CD4-positive, alpha-beta memory T cell (primary cell): ENCODE measurements at regions of chr4 and their contacts with region 1.

Region 1: DNA sequence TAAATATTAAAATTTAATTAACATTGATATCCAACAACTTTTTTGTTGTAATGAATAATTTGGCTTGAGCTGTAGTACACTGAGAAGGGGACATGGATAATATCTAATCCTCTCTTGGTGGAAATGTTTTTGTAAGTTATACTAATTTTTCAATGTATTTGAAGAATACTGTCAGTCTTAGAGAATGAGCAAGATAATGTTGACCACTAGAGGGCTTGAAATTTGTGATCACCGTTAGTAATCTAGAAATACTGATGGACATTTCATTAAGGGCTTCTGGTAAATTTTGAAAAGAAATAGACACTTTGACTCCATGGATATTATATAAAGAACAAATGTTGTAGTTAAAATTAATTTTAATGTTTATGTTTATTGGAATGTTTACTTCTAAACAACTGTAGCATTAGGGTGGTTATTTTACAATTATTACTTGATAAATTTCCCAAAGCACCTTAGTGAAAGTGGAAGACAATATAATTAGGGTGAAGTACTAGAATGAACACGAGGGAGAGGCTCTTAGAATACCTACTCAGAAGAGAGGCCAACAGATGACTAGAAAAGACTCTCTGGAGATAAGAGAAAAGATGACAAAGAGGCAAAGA is 20.0 kb upstream of the CAMK2D start:
- DNase-seq: peak in 4 of 5 donors; percentile 25 to 35 (median 30)
- H3K4me3 ChIP-seq: no peak overlapping the region
- H3K4me3 Mint-ChIP-seq: no peak overlapping the region
- H3K27ac ChIP-seq: no peak overlapping the region
- H3K27ac Mint-ChIP-seq: no peak overlapping the region
- H3K4me1 ChIP-seq: no peaks in the 10 kb centered on the region
- H3K4me1 Mint-ChIP-seq: peaks cover 0 to 8% (median 2%) of the 10 kb centered on the region in 4 donors
- H3K27me3 ChIP-seq: no peaks in the 10 kb centered on the region
- H3K27me3 Mint-ChIP-seq: peaks cover 0 to 1% of the 10 kb centered on the region in 2 donors

Region 2: DNA sequence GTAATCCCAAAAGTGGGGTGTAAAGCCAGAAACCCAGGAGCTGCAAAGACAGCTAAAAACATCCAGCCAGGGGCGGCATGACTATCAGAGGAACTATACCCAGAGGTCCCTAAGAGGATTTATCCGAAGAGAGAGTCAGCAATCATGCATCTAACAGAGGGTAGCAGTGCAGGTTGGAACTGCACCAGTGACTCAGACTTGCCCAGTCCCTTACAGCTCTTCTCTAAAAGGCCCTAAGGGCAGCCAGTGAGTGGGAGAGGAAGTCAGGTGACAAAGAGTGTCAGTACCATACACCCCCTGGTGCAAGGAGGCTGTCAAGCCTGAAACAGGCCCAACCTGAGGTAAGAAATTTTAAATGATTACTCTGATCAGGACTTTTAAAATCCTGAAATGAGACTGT is 108.1 kb before region 1 on chr4:
- CTCF ChIA-PET with region 1: no interaction called
- POLR2A ChIA-PET with region 1: no interaction called
- intact Hi-C with region 1: no loop called
- DNase-seq: peak in 1 of 5 donors; percentile 52
- H3K4me3 ChIP-seq: no peak overlapping the region
- H3K4me3 Mint-ChIP-seq: peak overlapping the region in 2 of 8 donors; percentile 10 to 28
- H3K27ac ChIP-seq: no peak overlapping the region
- H3K27ac Mint-ChIP-seq: peak overlapping the region in 2 of 7 donors; percentile 57 to 76
- H3K4me1 ChIP-seq: peaks cover 32% of the 10 kb centered on the region
- H3K4me1 Mint-ChIP-seq: peaks cover 31 to 54% (median 40%) of the 10 kb centered on the region in 4 donors
- H3K27me3 ChIP-seq: no peaks in the 10 kb centered on the region
- H3K27me3 Mint-ChIP-seq: no peaks in the 10 kb centered on the region

Region 3: GRCh38 chr4:113825272-113825671 is 43.7 kb after region 1 on chr4:
- CTCF ChIA-PET with region 1: interaction called, 4 read pairs
- POLR2A ChIA-PET with region 1: no interaction called
- intact Hi-C with region 1: loop called (anchors 5 kb)
- DNase-seq: peak in 4 of 5 donors; percentile 32 to 36 (median 34)
- H3K4me3 ChIP-seq: no peak overlapping the region
- H3K4me3 Mint-ChIP-seq: peak overlapping the region in 6 of 8 donors; percentile 0 to 74 (median 55)
- H3K27ac ChIP-seq: no peak overlapping the region
- H3K27ac Mint-ChIP-seq: peak overlapping the region in 4 of 7 donors; percentile 1 to 28 (median 20)
- H3K4me1 ChIP-seq: peaks cover 26% of the 10 kb centered on the region
- H3K4me1 Mint-ChIP-seq: peaks cover 28 to 43% (median 36%) of the 10 kb centered on the region in 4 donors
- H3K27me3 ChIP-seq: no peaks in the 10 kb centered on the region
- H3K27me3 Mint-ChIP-seq: no peaks in the 10 kb centered on the region

Region 4: GRCh38 chr4:113908829-113909228 is 127.3 kb after region 1 on chr4:
- CTCF ChIA-PET with region 1: interaction called, 5 read pairs
- POLR2A ChIA-PET with region 1: no interaction called
- intact Hi-C with region 1: loop called (anchors 1 kb)
- DNase-seq: peak; percentile 12 to 36 (median 24)
- H3K4me3 ChIP-seq: no peak overlapping the region
- H3K4me3 Mint-ChIP-seq: no peak overlapping the region
- H3K27ac ChIP-seq: no peak overlapping the region
- H3K27ac Mint-ChIP-seq: peak overlapping the region in 1 of 7 donors; percentile 14
- H3K4me1 ChIP-seq: peaks cover 28% of the 10 kb centered on the region
- H3K4me1 Mint-ChIP-seq: peaks cover 13 to 36% (median 21%) of the 10 kb centered on the region in 4 donors
- H3K27me3 ChIP-seq: no peaks in the 10 kb centered on the region
- H3K27me3 Mint-ChIP-seq: no peaks in the 10 kb centered on the region

Region 5: GRCh38 chr4:114072781-114073180 is 291.2 kb after region 1 on chr4:
- CTCF ChIA-PET with region 1: interaction called, 3 read pairs
- POLR2A ChIA-PET with region 1: no interaction called
- intact Hi-C with region 1: loop called (anchors 1 kb)
- DNase-seq: no peak
- H3K4me3 ChIP-seq: no peak overlapping the region
- H3K4me3 Mint-ChIP-seq: no peak overlapping the region
- H3K27ac ChIP-seq: no peak overlapping the region
- H3K27ac Mint-ChIP-seq: no peak overlapping the region
- H3K4me1 ChIP-seq: no peaks in the 10 kb centered on the region
- H3K4me1 Mint-ChIP-seq: peaks cover 0 to 5% (median 3%) of the 10 kb centered on the region in 4 donors
- H3K27me3 ChIP-seq: no peaks in the 10 kb centered on the region
- H3K27me3 Mint-ChIP-seq: peaks cover 0 to 1% of the 10 kb centered on the region in 2 donors